ENCODE measurements at regions of chr7 and their contacts with region 1.

Region 1: GRCh38 chr7:148940702-148941597 is 56.9 kb upstream of the EZH2 start:
- DNase-seq: peak; percentile 90
- ATAC-seq: peak; percentile 97

Region 2: DNA sequence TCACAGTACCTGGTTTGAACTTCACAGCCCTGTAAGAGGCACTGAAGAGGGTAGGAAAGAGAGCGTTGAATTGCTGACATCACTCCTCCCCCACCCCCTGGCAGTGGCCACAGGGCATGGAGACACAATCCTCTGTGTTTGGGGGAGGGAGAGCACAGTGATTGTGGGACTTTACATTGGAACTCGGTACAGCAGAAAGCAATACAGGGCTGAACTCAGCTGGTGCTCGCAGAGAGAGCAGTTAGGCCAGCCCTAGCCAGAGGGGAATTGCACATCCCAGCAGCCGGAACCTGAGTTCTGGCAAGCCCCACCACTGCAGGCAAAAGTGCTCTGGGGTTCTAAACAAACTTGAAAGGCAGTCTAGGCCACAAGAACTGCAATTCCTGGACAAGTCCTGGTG is 266.3 kb before region 1 on chr7:
- intact Hi-C with region 1: no loop called
- DNase-seq: no peak
- ATAC-seq: no peak

Region 3: GRCh38 chr7:148884299-148885022 is 56.5 kb before region 1 on chr7:
- intact Hi-C with region 1: loop called (anchors 2 kb)
- DNase-seq: peak; percentile 95
- ATAC-seq: peak; percentile 100

Measured in Right ventricle myocardium superior (tissue), 1 donor.